ENCODE measurements at regions of chr2 and their contacts with region 1.

Region 1: DNA sequence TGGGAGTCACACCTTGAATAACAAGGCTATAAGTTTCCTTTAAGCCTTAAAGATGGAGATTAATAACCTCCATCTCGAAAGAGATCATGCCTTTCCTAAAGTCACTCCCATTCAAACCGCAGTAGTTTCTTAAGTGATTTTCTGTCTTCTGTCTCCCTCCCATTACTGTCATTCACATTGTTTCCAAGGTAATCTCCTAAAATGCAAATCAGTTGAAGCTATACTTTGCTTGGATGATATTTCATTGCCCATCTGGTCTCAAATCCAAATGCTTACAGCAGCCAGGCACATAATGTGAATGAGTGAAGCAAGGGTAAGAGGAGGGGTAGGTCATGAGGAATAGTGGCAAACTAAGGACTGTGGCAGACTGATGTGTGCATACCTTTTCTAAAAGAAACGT is 116.4 kb downstream of the CCDC141 start:
- DNase-seq: no peak
- ATAC-seq: no peak
- H3K4me3 ChIP-seq: no peak overlapping the region
- H3K27ac ChIP-seq: no peak overlapping the region
- H3K4me1 ChIP-seq: no peaks in the 10 kb centered on the region
- H3K27me3 ChIP-seq: no peaks in the 10 kb centered on the region
- CTCF ChIP-seq: no peak

Region 2: GRCh38 chr2:179106676-179107428 is 173.4 kb after region 1 on chr2:
- intact Hi-C with region 1: loop called in 2 of 10 experiments (anchors 10 kb)
- DNase-seq: peak in 1 of 2 donors; percentile 49
- ATAC-seq: peak; percentile 28 to 92 (median 88)
- H3K4me3 ChIP-seq: no peak overlapping the region
- H3K27ac ChIP-seq: peak overlapping the region in 2 of 10 donors; percentile 13 to 57
- H3K4me1 ChIP-seq: peaks cover 0 to 31% (median 15%) of the 10 kb centered on the region in 9 donors
- H3K27me3 ChIP-seq: no peaks in the 10 kb centered on the region
- CTCF ChIP-seq: no peak

Measured in heart right ventricle (tissue), 16 donors.